ENCODE measurements at regions of chr12 and their contacts with region 1.

Region 1: DNA sequence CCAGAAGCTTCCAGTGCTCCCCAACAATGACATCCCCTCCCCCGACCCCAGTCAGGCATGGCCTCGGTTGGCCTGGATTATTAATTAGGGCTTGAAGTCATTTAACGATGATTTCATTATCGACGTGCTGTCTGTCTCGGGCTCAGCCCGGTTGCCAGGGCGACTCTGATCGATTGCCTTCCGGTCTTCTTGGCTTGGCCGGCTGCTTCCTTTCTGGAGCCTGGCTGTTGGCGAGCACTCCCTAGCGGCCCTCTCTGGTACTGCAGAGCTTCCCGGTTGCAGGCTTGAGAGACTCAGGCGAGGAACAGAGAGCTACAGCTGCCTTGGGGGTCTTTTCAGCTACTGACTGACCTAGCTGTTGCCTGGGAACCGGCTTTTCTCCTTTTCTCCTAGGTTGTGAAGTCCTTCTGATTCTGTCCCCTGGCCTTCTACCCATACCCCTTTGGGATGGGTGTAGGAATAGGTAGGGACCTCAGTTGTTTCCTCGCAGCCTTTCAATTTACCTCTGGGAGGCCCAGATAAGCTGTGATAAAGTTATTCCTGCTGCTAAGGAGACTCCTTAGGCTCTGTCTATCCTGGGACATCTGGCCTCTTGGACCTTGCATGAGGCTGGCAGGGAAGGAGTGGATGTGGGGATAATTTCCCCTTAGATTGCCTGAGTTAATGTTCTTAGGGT is 5.5 kb upstream of the CISTR start:
- DNase-seq: peak; percentile 91
- ATAC-seq: peak; percentile 83
- H3K4me3 Mint-ChIP-seq: peak overlapping the region; percentile 42
- H3K27ac Mint-ChIP-seq: peak overlapping the region; percentile 51
- H3K4me1 Mint-ChIP-seq: peaks cover 5% of the 10 kb centered on the region
- H3K27me3 Mint-ChIP-seq: peaks cover 36% of the 10 kb centered on the region

Region 2: GRCh38 chr12:53727310-53728041 is 29.8 kb before region 1 on chr12 and contains the start of gene CALCOCO1:
- CTCF ChIA-PET with region 1: interaction called, 13 read pairs
- POLR2A ChIA-PET with region 1: no interaction called
- DNase-seq: peak; percentile 99
- ATAC-seq: peak; percentile 99
- H3K4me3 Mint-ChIP-seq: peak within 1 kb of the TSS; percentile 86
- H3K27ac Mint-ChIP-seq: peak within 1 kb of the TSS; percentile 83
- H3K4me1 Mint-ChIP-seq: peaks cover 26% of the 10 kb centered on the region
- H3K27me3 Mint-ChIP-seq: peaks cover 3% of the 10 kb centered on the region
- total RNA-seq, gene CALCOCO1: 23.8 to 27.9 TPM

Measured in activated CD8-positive, alpha-beta T cell treated with anti-CD3 and anti-CD28 coated beads, Interleukin-2, amount 10 ng/mL, durations not matched to agents 7 days and 5 days (primary cell).